ENCODE measurements at regions of chr9 and their contacts with region 1.

Region 1: DNA sequence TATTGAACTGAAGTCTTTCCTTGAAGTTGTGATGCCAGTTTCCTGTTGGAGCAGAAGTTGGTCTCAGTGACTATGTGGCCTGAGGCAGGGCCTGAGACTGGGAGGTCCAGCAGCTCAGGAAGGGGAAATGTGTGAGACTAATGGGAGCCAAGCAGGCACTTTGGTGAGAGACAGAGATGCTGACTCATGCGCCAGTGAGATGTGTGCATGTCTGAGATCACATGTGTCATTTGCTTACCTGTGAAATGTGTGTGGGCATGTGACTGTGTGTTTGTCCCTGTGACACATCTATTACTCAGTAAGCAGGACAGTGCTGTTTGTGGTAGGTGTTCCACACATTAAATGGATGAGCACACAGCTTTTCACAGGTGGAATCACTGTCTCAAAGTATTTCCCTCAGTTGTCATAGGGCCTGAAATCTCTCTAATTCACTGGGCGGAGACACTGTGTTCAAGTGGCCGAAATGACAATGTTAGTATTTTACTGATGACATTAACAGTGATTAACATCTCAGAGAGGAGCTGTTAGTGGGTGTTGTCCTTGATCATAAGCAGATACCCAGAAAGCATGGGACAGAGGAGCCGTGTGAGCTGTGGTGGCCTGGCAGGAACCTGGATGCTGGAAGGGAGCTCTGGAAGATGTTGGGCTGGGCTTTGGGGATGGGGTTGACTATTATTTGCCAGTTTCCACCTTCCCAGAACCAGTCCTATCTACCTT is 7.4 kb downstream of the NPR2 start:
- DNase-seq: no peak
- CTCF ChIP-seq: no peak

Region 2: DNA sequence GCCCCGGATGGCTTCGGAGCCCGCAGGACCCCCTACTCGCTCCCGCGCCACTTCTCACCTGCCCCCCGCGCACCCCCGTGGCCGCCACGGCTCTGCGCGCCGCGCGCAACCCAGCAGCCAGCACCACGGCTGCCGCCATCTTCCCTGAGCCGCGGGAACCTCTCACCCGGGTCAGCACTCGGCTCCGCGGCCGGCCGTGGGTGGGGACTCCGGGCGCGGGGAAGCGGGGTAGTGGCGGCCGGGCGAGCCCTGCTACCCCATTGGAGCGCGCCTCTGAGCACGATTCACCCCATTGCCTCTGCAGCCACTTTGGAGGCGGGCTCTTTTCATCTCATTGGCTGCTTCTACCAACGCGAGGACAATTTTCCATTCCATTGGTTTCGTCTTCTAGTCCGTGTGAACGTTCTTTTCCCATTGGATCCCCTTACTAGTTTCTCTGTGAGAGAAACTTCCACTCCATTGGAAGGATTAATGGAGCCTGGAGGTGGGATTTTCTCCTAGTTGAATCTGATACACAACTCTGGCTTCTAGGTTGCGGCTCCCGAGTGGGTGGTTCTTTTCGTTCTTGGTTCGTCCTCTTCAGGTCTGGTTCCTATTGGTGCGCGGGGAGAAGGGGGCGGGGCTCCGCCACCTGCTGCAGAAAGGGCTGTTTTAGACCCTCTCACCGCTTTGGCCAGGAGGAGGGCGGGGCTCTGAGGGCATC is 16.2 kb after region 1 on chr9 and contains the start of gene HINT2:
- CTCF ChIA-PET with region 1: interaction called, 47 read pairs
- POLR2A ChIA-PET with region 1: no interaction called
- DNase-seq: peak; percentile 95
- CTCF ChIP-seq: no peak